IMR-90 (cell line): ENCODE measurements at regions of chr1 and their contacts with region 1.

Region 1: GRCh38 chr1:109532365-109533136 is 7.1 kb upstream of the GPR61 start:
- DNase-seq: peak; percentile 68
- ATAC-seq: peak; percentile 95
- H3K4me3 ChIP-seq: no peak overlapping the region
- H3K27ac ChIP-seq: peak overlapping the region; percentile 30
- H3K4me1 ChIP-seq: peaks cover 7% of the 10 kb centered on the region
- H3K27me3 ChIP-seq: peaks cover 5% of the 10 kb centered on the region
- CTCF ChIP-seq: peak; percentile 96
- POLR2A ChIP-seq: no peak
- RAD21 ChIP-seq: peak; percentile 92

Region 2: DNA sequence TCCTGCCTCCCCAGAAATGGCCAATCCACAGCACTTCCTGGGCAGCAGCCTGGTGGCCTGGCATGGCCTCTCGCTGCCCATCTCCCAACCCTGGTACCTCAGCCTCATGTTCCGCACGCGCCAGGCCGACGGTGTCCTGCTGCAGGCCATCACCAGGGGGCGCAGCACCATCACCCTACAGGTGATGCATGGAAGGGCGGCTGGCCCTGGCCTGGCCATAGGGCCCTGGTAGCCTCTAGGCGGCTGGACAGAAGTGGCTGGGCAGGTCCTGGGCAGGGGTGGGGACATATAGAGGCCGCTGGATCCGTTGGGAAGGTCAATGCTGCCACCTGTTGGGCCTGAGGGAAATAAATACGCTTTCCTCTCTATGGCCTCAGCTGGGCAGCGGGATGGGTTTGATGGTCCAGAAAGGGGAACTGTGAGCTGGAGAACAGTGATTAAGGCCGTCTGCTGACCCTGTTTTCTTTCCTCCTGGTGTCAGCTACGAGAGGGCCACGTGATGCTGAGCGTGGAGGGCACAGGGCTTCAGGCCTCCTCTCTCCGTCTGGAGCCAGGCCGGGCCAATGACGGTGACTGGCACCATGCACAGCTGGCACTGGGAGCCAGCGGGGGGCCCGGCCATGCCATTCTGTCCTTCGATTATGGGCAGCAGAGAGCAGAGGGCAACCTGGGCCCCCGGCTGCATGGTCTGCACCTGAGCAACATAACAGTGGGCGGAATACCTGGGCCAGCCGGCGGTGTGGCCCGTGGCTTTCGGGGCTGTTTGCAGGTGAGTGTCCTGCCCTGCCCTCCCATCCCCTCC is 268.8 kb before region 1 on chr1:
- CTCF ChIA-PET with region 1: no interaction called
- POLR2A ChIA-PET with region 1: no interaction called
- dilution Hi-C with region 1: no loop called
- in situ Hi-C with region 1: loop called (anchors 10 kb)
- intact Hi-C with region 1: loop called (anchors 5 kb)
- DNase-seq: peak; percentile 79
- ATAC-seq: peak; percentile 97
- H3K4me3 ChIP-seq: no peak overlapping the region
- H3K27ac ChIP-seq: no peak overlapping the region
- H3K4me1 ChIP-seq: no peaks in the 10 kb centered on the region
- H3K27me3 ChIP-seq: no peaks in the 10 kb centered on the region
- CTCF ChIP-seq: peak; percentile 99
- POLR2A ChIP-seq: no peak
- RAD21 ChIP-seq: peak; percentile 89

Region 3: GRCh38 chr1:109277434-109278204 is 254.9 kb before region 1 on chr1:
- CTCF ChIA-PET with region 1: no interaction called
- POLR2A ChIA-PET with region 1: no interaction called
- dilution Hi-C with region 1: no loop called
- in situ Hi-C with region 1: no loop called
- intact Hi-C with region 1: loop called (anchors 2 kb)
- DNase-seq: peak; percentile 64
- ATAC-seq: peak; percentile 62
- H3K4me3 ChIP-seq: no peak overlapping the region
- H3K27ac ChIP-seq: no peak overlapping the region
- H3K4me1 ChIP-seq: peaks cover 16% of the 10 kb centered on the region
- H3K27me3 ChIP-seq: no peaks in the 10 kb centered on the region
- CTCF ChIP-seq: peak; percentile 72
- POLR2A ChIP-seq: no peak
- RAD21 ChIP-seq: peak; percentile 75

Region 4: DNA sequence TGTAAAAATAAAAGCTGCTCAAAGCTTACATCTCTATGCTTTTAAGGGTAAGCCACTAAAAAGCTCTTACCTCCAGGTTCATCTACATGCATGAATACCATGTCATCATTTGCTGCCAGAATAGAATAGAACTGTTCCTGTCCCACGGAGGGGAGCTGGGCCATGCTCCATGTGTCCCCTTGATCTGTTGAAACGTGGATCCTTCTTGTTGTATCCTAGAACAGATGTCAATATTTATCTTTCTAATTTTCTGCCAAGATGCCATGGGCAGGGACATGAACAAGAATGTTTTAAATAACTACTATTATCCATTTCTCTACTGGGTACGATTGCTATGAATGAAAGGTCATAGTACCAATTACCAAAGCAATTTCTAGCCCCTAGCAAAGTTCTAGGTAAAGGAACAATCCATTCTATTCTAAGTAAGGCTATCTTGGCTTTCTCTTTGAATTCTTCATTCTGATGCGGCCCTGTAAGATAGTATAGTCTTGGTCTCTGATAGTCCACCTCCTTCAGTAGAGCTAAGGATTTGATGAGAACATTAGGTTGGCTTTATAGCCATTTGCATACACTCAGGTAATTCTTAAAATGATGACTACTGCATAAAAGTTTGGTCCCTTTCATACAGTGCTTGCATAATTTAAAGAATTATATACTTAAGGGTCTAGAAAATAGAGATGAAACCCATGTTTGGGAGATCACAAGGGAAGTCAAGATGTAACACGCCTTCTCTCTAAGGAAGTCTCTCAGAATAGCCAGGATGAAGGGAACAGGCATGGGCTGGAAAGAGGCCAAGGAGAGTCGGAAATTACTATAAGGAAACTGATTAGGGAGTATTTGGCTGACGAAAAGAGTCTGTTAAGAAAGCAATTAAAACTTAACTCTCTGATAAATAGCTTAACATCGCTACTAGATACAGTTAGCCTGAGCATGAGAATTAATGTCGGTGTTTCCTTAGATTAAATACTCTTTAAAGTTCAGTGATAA is 190.3 kb before region 1 on chr1:
- CTCF ChIA-PET with region 1: no interaction called
- POLR2A ChIA-PET with region 1: no interaction called
- dilution Hi-C with region 1: no loop called
- in situ Hi-C with region 1: no loop called
- intact Hi-C with region 1: no loop called
- DNase-seq: no peak
- ATAC-seq: no peak
- H3K4me3 ChIP-seq: no peak overlapping the region
- H3K27ac ChIP-seq: no peak overlapping the region
- H3K4me1 ChIP-seq: no peaks in the 10 kb centered on the region
- H3K27me3 ChIP-seq: no peaks in the 10 kb centered on the region
- CTCF ChIP-seq: no peak
- POLR2A ChIP-seq: no peak
- RAD21 ChIP-seq: no peak

Region 5: DNA sequence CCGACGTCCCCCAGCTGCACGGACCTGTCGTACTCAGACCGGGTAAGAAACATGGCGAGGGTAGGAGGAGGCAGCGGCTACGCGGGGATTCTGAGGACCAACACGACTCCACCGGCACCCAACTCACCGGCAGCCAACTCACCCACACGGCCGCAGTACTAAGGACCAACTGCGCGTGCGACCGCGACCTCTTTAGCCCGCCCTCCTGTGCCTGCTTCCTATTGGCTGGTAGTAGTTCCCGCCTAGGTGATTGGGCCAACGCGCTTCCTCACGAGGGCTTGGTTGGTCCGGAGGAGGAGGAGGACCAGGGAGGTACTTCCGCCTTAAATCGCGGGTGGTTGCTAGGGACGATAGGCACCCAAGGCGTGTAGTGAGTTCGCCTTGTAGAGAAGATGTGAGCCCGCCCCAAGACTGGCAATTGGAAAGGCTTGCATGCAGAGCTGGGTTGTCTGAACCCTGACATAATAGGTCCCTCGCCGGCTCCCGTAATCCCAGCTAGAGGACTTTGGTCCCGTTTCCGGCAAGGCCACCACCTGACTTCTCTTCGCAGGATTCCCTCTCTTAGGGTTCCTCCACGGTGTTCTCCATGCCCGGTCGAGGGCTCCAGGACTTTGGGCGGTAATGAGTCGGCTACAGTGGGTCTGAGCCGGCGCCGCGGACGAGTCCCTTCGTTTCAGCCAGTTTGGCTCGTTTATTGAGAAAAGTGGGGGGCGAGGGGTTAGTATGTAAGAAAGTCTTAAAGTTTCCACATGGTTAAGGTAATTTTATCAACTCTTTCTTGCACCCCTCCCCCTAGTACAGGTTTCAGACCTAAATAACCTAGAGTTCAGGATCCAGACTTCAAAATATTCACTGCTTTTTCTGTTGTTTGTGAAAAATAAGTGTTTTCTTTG is 106.0 kb before region 1 on chr1 and contains the start of gene PSMA5:
- CTCF ChIA-PET with region 1: interaction called, 7 read pairs
- POLR2A ChIA-PET with region 1: no interaction called
- dilution Hi-C with region 1: no loop called
- in situ Hi-C with region 1: no loop called
- intact Hi-C with region 1: loop called (anchors 2 kb)
- DNase-seq: peak; percentile 100
- ATAC-seq: peak; percentile 98
- H3K4me3 ChIP-seq: peak within 1 kb of the TSS; percentile 70
- H3K27ac ChIP-seq: peak within 1 kb of the TSS; percentile 76
- H3K4me1 ChIP-seq: peaks cover 8% of the 10 kb centered on the region
- H3K27me3 ChIP-seq: no peaks in the 10 kb centered on the region
- CTCF ChIP-seq: no peak
- POLR2A ChIP-seq: peak; percentile 97
- RAD21 ChIP-seq: peak; percentile 18; the same call in 1 of the 2 replicates
- total RNA-seq, gene PSMA5: 75.5 and 83.9 TPM in 2 replicates

Region 6: DNA sequence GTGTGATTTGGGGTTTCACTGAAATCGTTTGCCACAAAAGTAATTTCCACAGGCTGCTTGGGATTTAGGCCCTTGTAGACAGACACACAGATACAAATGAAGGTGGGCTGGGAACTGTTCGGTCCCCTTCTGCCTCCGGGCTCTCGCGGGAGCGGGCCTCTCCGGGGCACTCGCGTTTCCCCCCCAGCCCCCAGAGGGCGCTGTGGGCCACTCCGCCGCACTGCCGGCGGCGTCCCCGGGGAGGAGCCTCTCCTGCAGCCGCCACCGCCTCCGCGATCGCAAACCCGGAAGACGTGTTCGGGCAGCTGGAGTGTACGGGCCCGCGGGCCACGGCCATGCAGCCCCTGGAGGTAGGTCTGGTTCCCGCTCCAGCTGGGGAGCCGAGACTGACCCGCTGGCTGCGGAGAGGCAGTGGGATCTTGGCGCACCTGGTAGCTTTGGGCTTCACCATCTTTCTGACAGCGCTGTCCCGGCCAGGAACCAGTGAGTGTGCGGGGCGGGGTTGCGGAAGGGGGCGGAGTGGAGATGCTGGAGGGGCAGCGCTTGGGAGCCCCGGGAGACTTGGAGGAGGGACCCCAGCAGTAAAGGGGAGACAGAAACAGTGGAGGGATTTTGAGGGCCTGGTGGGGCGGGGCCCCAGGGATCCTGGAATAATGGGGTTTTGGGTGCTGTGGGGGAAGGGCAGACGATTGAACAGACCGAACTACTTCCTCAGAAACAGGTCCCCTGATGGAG is 38.6 kb before region 1 on chr1 and contains the start of gene CYB561D1:
- CTCF ChIA-PET with region 1: interaction called, 75 read pairs
- POLR2A ChIA-PET with region 1: no interaction called
- dilution Hi-C with region 1: no loop called
- in situ Hi-C with region 1: loop called (anchors 5 kb)
- intact Hi-C with region 1: loop called (anchors 1 kb)
- DNase-seq: peak; percentile 78
- ATAC-seq: peak; percentile 95
- H3K4me3 ChIP-seq: peak within 1 kb of the TSS; percentile 91
- H3K27ac ChIP-seq: peak within 1 kb of the TSS; percentile 86
- H3K4me1 ChIP-seq: peaks cover 8% of the 10 kb centered on the region
- H3K27me3 ChIP-seq: no peaks in the 10 kb centered on the region
- CTCF ChIP-seq: peak; percentile 98
- POLR2A ChIP-seq: no peak
- RAD21 ChIP-seq: peak; percentile 71
- total RNA-seq, gene CYB561D1: 3.6 and 5.7 TPM in 2 replicates

Region 7: GRCh38 chr1:109499661-109500536 is 32.7 kb before region 1 on chr1:
- CTCF ChIA-PET with region 1: interaction called, 75 read pairs
- POLR2A ChIA-PET with region 1: no interaction called
- dilution Hi-C with region 1: no loop called
- in situ Hi-C with region 1: loop called (anchors 5 kb)
- intact Hi-C with region 1: loop called (anchors 1 kb)
- DNase-seq: peak; percentile 76
- ATAC-seq: peak; percentile 73
- H3K4me3 ChIP-seq: no peak overlapping the region
- H3K27ac ChIP-seq: peak overlapping the region; percentile 17
- H3K4me1 ChIP-seq: peaks cover 27% of the 10 kb centered on the region
- H3K27me3 ChIP-seq: no peaks in the 10 kb centered on the region
- CTCF ChIP-seq: peak; percentile 38
- POLR2A ChIP-seq: no peak
- RAD21 ChIP-seq: no peak

Region 8: DNA sequence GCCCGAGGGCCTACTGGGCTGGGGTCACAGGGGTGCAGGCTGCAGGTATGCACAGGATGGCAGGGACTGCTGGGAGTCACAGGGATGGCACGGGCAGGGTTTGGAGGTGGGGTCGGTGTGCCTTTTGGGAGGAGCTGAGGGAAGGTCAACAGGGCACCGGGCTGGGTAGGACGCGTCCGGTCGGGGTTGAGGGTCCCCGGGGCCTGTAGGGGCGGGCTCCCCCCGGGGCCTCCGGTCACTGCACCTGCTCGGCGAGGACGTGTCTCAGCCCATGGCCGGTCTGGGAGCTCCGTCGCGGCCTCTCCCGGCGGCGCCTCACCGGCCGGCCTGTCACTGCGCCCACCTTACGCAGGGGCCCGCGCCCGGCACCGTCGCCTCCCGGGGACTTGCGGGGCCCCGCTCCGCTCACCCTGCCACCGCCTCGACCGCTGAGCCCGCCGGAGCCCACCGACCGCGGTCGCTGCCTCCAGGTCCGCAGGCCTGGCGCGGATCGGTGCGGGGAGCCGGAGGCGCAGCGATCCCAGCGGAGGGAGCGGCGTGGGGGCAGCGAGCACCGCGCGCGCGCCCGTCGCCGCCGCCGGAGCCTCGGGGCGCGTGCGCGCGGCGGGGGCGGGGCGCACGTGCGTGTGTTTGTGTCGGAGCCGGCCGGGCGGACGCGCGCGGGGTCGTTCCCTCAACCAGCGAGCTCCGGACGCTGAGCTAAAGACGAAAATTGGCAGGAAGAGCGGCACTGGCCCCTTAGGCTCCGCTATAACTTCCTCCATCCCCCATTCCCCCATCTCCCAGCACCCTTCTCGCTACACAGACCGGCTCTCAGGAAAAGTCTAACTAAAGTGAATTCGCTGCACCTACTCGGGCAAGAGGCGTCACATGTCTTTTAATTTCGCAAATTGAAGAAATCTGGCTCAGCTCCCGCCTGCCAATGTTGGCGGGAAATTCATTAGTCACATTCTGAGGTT is 23.1 kb before region 1 on chr1 and contains the start of gene AMIGO1:
- CTCF ChIA-PET with region 1: interaction called, 13 read pairs
- POLR2A ChIA-PET with region 1: no interaction called
- dilution Hi-C with region 1: no loop called
- in situ Hi-C with region 1: no loop called
- intact Hi-C with region 1: no loop called
- DNase-seq: peak; percentile 43
- ATAC-seq: peak; percentile 93
- H3K4me3 ChIP-seq: peak within 1 kb of the TSS; percentile 81
- H3K27ac ChIP-seq: peak within 1 kb of the TSS; percentile 48; the same call in 1 of the 2 replicates
- H3K4me1 ChIP-seq: peaks cover 5% of the 10 kb centered on the region
- H3K27me3 ChIP-seq: peaks cover 9% of the 10 kb centered on the region
- CTCF ChIP-seq: no peak
- POLR2A ChIP-seq: no peak
- RAD21 ChIP-seq: no peak
- total RNA-seq, gene AMIGO1: 1.4 and 1.6 TPM in 2 replicates